Panc1 (cell line): ENCODE measurements at regions of chr12 and their contacts with region 1.

Region 1: DNA sequence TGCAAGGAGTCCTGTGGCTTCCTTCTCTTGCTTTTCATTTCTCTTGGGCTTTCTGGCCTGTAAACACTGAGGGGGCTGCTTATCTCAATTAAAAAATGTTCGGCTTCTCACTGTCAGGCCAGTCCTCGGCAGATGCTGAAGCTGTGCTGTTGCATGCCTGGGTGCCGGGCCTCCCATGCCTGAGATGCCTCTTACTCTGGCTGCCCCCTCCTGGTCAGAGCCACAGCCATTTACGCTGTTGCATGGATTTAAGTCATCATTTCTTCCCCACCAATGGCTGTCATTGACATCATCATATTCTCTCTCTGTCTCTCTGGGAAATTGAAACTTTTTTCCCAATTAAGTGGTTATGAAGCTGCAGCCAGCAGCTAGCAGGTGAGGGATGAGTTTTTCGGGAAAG is 53.7 kb downstream of the FOXN4 start:
- DNase-seq: no peak
- ATAC-seq: peak; percentile 77; the same call in 1 of the 2 replicates
- H3K4me3 ChIP-seq: no peak overlapping the region
- H3K27ac ChIP-seq: no peak overlapping the region
- H3K4me1 ChIP-seq: no peaks in the 10 kb centered on the region
- H3K27me3 ChIP-seq: no peaks in the 10 kb centered on the region
- CTCF ChIP-seq: peak; percentile 59

Region 2: DNA sequence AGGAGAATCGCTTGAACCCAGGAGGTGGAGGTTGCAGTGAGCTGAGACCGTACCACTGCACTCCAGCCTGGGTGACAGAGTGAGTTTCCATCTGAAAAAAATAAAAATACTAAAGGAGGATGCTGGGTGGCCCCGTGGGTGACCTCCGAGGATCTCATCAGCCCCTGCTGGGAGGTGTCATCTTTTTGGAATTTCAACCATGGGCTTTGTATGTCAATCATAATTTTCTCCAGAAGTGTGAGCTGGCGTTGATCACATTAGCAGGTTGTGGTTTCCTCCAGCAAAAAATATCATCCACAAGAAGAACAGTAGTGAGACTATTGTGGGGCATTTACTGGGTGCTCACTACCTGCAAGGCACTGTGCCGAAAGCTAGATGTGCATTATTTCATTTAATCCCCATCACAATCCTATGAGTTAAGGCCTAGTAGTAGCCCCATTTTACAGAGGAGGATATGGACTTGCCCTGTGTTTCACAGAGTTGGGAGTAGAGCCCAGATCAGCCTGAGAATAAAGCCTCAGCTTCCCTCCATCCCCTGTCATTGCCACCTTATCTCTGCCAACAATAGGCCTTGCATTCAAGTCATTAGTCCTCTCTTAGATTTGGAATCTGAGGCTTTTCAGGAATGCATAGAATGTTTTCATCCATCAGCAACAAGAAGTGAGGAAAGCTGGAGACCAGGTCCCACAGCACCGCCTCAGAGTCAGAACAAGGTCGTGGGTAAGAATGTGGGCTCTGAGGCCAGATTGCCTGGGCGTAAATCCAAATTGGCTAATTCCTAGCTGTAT is 274.4 kb before region 1 on chr12:
- CTCF ChIA-PET with region 1: no interaction called
- POLR2A ChIA-PET with region 1: no interaction called
- in situ Hi-C with region 1: no loop called
- intact Hi-C with region 1: no loop called
- DNase-seq: no peak
- ATAC-seq: peak; percentile 45
- H3K4me3 ChIP-seq: no peak overlapping the region
- H3K27ac ChIP-seq: no peak overlapping the region
- H3K4me1 ChIP-seq: no peaks in the 10 kb centered on the region
- H3K27me3 ChIP-seq: peaks cover 3% of the 10 kb centered on the region; the same call in 1 of the 2 replicates
- CTCF ChIP-seq: no peak

Region 3: GRCh38 chr12:109110988-109111495 is 144.3 kb before region 1 on chr12:
- CTCF ChIA-PET with region 1: interaction called, 3 read pairs
- POLR2A ChIA-PET with region 1: no interaction called
- in situ Hi-C with region 1: no loop called
- intact Hi-C with region 1: loop called (anchors 10 kb)
- DNase-seq: no peak
- ATAC-seq: peak; percentile 98
- H3K4me3 ChIP-seq: peak overlapping the region; percentile 53 to 71
- H3K27ac ChIP-seq: peak overlapping the region; percentile 85
- H3K4me1 ChIP-seq: peaks cover 18% of the 10 kb centered on the region
- H3K27me3 ChIP-seq: no peaks in the 10 kb centered on the region
- CTCF ChIP-seq: no peak

Region 4: DNA sequence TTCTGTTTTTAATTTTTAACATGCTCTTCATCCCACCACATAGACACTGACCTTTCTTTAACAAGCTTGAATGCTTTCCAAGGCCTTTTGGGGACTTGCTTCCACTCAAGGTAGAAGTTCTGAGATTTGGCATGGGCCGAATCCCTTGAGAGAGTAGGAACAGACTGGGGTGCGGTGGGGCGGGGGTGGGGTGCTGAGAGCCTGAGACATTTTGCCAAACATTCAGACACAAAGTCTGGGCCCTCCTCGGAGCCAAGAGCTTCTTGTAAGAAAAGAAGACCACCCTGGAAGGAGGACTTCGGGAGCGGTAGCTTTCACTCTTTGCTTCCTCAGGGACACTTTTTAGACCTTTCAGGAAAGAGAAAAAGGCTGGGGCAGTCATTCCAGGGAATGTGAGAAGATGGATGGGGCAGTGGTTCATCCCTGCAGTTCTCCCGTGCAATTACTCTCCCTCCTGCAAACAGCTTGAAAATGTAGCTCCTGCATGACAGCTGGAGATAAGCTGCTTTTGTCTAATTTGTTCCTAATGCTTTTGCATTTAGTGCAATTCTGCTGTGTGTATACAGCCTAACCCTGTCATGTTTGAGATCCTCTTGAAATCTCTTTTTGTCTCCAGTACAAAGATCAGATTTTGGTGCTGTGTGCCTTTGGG is 76.0 kb after region 1 on chr12:
- CTCF ChIA-PET with region 1: interaction called, 16 read pairs
- POLR2A ChIA-PET with region 1: no interaction called
- in situ Hi-C with region 1: no loop called
- intact Hi-C with region 1: no loop called
- DNase-seq: no peak
- ATAC-seq: no peak
- H3K4me3 ChIP-seq: no peak overlapping the region
- H3K27ac ChIP-seq: no peak overlapping the region
- H3K4me1 ChIP-seq: no peaks in the 10 kb centered on the region
- H3K27me3 ChIP-seq: peaks cover 2% of the 10 kb centered on the region; the same call in 1 of the 2 replicates
- CTCF ChIP-seq: no peak